ENCODE measurements at regions of chr19 and their contacts with region 1.

Region 1: GRCh38 chr19:54189735-54190502 is 539 bp upstream of the MBOAT7 start:
- DNase-seq: peak; percentile 100
- ATAC-seq: peak; percentile 72 to 75
- H3K4me3 ChIP-seq: peak overlapping the region; percentile 72 to 95 (median 89)
- H3K27ac ChIP-seq: peak overlapping the region; percentile 92 to 98 (median 95)
- H3K4me1 ChIP-seq: peaks cover 15 to 20% of the 10 kb centered on the region in 2 donors
- H3K27me3 ChIP-seq: no peaks in the 10 kb centered on the region
- CTCF ChIP-seq: no peak
- POLR2A ChIP-seq: peak; percentile 58 to 72

Region 2: GRCh38 chr19:54115109-54116063 is 74.5 kb before region 1 on chr19 and contains the starts of genes PRPF31 and TFPT:
- in situ Hi-C with region 1: no loop called
- intact Hi-C with region 1: loop called (anchors 1 kb)
- DNase-seq: peak; percentile 94 to 95
- ATAC-seq: peak; percentile 95 to 97
- H3K4me3 ChIP-seq: peak within 1 kb of the TSS; percentile 69 to 98 (median 91)
- H3K27ac ChIP-seq: peak within 1 kb of the TSS; percentile 87 to 99 (median 90)
- H3K4me1 ChIP-seq: peaks cover 21% of the 10 kb centered on the region in 2 donors
- H3K27me3 ChIP-seq: no peaks in the 10 kb centered on the region
- CTCF ChIP-seq: peak in 1 of 5 experiments; percentile 24
- POLR2A ChIP-seq: peak; percentile 63 to 76
- total RNA-seq, gene PRPF31: 26.6 to 39.4 (median 37.2) TPM
- total RNA-seq, gene TFPT: 7.5 to 18.1 (median 17.5) TPM

Region 3: GRCh38 chr19:54159352-54160181 is 30.4 kb before region 1 on chr19 and contains the start of gene LENG1:
- in situ Hi-C with region 1: no loop called
- intact Hi-C with region 1: loop called (anchors 1 kb)
- DNase-seq: peak; percentile 100
- ATAC-seq: peak; percentile 96 to 98
- H3K4me3 ChIP-seq: peak within 1 kb of the TSS; percentile 78 to 87 (median 84)
- H3K27ac ChIP-seq: peak within 1 kb of the TSS; percentile 93 to 98 (median 96)
- H3K4me1 ChIP-seq: peaks cover 23 to 38% of the 10 kb centered on the region in 2 donors
- H3K27me3 ChIP-seq: peaks cover 3 to 8% (median 3%) of the 10 kb centered on the region in 3 donors
- CTCF ChIP-seq: peak in 4 of 5 experiments; percentile 31 to 43 (median 37)
- POLR2A ChIP-seq: peak; percentile 68 to 80
- total RNA-seq, gene LENG1: 6.5 to 14.2 (median 11.9) TPM

Region 4: GRCh38 chr19:54172471-54173358 is 17.2 kb before region 1 on chr19 and contains the start of gene TMC4:
- in situ Hi-C with region 1: no loop called
- intact Hi-C with region 1: no loop called
- DNase-seq: no peak
- ATAC-seq: peak; percentile 48 to 61
- H3K4me3 ChIP-seq: peak within 1 kb of the TSS in 2 of 4 donors; percentile 17 to 22
- H3K27ac ChIP-seq: peak within 1 kb of the TSS; percentile 37 to 69 (median 54)
- H3K4me1 ChIP-seq: peaks cover 0 to 4% of the 10 kb centered on the region in 2 donors
- H3K27me3 ChIP-seq: peaks cover 4 to 18% (median 11%) of the 10 kb centered on the region in 3 donors
- CTCF ChIP-seq: no peak
- POLR2A ChIP-seq: no peak
- total RNA-seq, gene TMC4: 0.87 to 1.6 TPM in 2 of 4 donors, not detected in the others

Region 5: GRCh38 chr19:54209811-54210494 is 20.0 kb after region 1 on chr19:
- in situ Hi-C with region 1: no loop called
- intact Hi-C with region 1: loop called (anchors 1 kb)
- DNase-seq: peak; percentile 66 to 84
- ATAC-seq: peak; percentile 87 to 89
- H3K4me3 ChIP-seq: no peak overlapping the region
- H3K27ac ChIP-seq: peak overlapping the region; percentile 74 to 95 (median 86)
- H3K4me1 ChIP-seq: peaks cover 38 to 47% of the 10 kb centered on the region in 2 donors
- H3K27me3 ChIP-seq: no peaks in the 10 kb centered on the region
- CTCF ChIP-seq: no peak
- POLR2A ChIP-seq: peak; percentile 46 to 50

Region 6: GRCh38 chr19:54281007-54281728 is 91.2 kb after region 1 on chr19 and contains the start of gene LILRB2:
- in situ Hi-C with region 1: no loop called
- intact Hi-C with region 1: no loop called
- DNase-seq: no peak
- ATAC-seq: no peak
- H3K4me3 ChIP-seq: no peak within 1 kb of the TSS
- H3K27ac ChIP-seq: no peak within 1 kb of the TSS
- H3K4me1 ChIP-seq: no peaks in the 10 kb centered on the region
- H3K27me3 ChIP-seq: peaks cover 0 to 5% (median 0%) of the 10 kb centered on the region in 3 donors
- CTCF ChIP-seq: no peak
- POLR2A ChIP-seq: no peak
- total RNA-seq, gene LILRB2: 0.61 to 1.3 (median 1.2) TPM

Region 7: GRCh38 chr19:54448774-54449700 is 259.1 kb after region 1 on chr19 and contains the start of gene LENG8:
- in situ Hi-C with region 1: no loop called
- intact Hi-C with region 1: loop called (anchors 1 kb)
- DNase-seq: peak; percentile 97 to 98
- ATAC-seq: peak; percentile 95 to 96
- H3K4me3 ChIP-seq: peak within 1 kb of the TSS; percentile 87 to 95 (median 90)
- H3K27ac ChIP-seq: peak within 1 kb of the TSS; percentile 92 to 98 (median 93)
- H3K4me1 ChIP-seq: peaks cover 22 to 31% of the 10 kb centered on the region in 2 donors
- H3K27me3 ChIP-seq: no peaks in the 10 kb centered on the region
- CTCF ChIP-seq: no peak
- POLR2A ChIP-seq: peak; percentile 89 to 95
- total RNA-seq, gene LENG8: 9.9 to 49.5 (median 15.5) TPM

Measured in gastrocnemius medialis (tissue), 4 donors.